Dorsolateral prefrontal cortex (tissue), 120 donors: ENCODE measurements at regions of chr2 and their contacts with region 1.

Region 1: GRCh38 chr2:32277674-32278482 is at the start of gene YIPF4:
- DNase-seq: peak; percentile 74 to 93 (median 86)
- H3K4me3 ChIP-seq: peak within 1 kb of the TSS; percentile 68 to 100 (median 96)
- H3K27ac ChIP-seq: peak within 1 kb of the TSS; percentile 63 to 94 (median 84)
- H3K27me3 ChIP-seq: peaks cover 0 to 8% (median 0%) of the 10 kb centered on the region in 45 donors
- CTCF ChIP-seq: peak in 6 of 56 donors; percentile 4 to 17 (median 7)
- total RNA-seq, gene YIPF4: 30.3 to 73.0 (median 46.0) TPM

Region 2: DNA sequence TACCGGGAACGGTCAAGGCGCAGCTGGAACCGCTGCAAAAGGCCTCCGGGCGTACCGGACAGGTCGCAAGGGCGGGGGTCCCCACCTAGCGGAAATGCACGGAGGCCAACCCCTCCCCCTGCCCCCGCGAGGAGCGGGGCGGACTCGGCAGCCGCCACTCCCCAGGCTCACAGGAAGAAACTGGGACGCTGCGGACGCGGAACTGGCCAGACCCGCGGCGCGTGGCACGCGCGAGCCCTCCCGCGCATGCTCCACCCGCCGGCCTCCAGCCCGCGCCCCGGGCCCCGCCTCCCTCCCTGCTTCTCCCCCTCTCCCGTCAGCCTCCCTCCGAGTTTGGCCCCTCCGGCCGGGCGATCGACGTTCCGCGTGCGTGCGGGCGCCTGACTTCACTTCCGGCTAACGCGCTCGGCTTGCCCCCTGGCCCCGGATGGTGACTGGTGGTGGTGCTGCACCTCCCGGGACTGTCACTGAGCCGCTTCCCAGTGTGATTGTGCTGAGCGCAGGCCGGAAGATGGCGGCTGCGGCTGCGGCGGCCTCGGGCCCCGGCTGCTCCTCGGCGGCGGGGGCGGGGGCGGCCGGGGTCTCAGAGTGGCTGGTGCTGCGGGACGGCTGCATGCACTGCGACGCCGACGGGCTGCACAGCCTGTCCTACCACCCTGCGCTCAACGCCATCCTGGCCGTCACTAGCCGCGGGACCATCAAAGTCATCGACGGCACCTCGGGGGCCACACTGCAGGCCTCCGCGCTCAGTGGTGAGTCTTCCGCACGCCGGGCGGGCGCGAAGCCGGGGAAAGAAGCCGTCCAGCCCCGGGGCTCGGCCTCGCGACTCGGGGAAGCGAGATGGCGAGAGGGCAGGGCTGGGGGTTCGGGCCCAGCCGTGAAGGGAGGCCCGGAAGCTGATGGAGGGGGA is 79.1 kb after region 1 on chr2 and contains the start of gene BIRC6:
- intact Hi-C with region 1: loop called (anchors 5 to 10 kb)
- DNase-seq: peak; percentile 96 to 100 (median 98)
- H3K4me3 ChIP-seq: peak within 1 kb of the TSS; percentile 73 to 100 (median 98)
- H3K27ac ChIP-seq: peak within 1 kb of the TSS; percentile 68 to 98 (median 94)
- H3K27me3 ChIP-seq: no peaks in the 10 kb centered on the region
- CTCF ChIP-seq: peak in 28 of 56 donors; percentile 4 to 50 (median 27)
- total RNA-seq, gene BIRC6: 104 to 180 (median 140) TPM

Region 3: DNA sequence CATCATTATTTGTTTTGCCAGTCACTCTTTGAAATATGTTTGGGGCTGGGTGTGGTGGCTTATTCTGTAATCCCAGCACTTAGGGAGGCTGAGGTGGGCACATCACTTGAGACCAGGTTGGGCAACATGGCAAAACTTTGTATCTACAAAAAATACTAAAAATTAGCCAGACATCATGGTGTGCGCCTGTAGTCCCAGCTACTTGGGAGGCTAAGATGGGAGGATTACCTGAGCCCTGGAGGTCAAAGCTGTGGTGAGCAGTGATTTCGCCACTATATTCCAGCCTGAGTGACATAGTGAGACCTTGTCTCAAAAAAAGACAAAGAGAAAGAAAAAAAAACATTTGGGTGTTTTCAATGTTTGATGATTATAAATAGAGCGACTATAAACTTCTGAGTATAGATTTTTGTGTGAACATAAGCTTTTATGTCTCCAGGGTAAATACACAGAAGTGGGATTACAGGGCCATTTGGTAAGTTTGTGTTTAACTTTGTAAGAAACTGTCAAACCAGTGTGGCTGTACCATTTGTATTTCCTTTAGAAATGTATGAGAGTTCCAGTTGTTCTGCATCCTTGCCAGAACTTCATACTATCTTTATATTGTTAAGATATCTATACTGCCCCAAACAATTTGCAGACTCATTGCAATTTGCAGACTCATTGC is 94.8 kb after region 1 on chr2:
- intact Hi-C with region 1: no loop called
- DNase-seq: no peak
- H3K4me3 ChIP-seq: no peak overlapping the region
- H3K27ac ChIP-seq: no peak overlapping the region
- H3K27me3 ChIP-seq: no peaks in the 10 kb centered on the region
- CTCF ChIP-seq: no peak

Region 4: GRCh38 chr2:32402091-32402490 is 124.2 kb after region 1 on chr2:
- intact Hi-C with region 1: no loop called
- DNase-seq: no peak
- H3K4me3 ChIP-seq: no peak overlapping the region
- H3K27ac ChIP-seq: no peak overlapping the region
- H3K27me3 ChIP-seq: no peaks in the 10 kb centered on the region
- CTCF ChIP-seq: no peak